Activated naive CD4-positive, alpha-beta T cell treated with anti-CD3 and anti-CD28 coated beads for 36 hours (primary cell): ENCODE measurements at regions of chrX and their contacts with region 1.

Region 1: DNA sequence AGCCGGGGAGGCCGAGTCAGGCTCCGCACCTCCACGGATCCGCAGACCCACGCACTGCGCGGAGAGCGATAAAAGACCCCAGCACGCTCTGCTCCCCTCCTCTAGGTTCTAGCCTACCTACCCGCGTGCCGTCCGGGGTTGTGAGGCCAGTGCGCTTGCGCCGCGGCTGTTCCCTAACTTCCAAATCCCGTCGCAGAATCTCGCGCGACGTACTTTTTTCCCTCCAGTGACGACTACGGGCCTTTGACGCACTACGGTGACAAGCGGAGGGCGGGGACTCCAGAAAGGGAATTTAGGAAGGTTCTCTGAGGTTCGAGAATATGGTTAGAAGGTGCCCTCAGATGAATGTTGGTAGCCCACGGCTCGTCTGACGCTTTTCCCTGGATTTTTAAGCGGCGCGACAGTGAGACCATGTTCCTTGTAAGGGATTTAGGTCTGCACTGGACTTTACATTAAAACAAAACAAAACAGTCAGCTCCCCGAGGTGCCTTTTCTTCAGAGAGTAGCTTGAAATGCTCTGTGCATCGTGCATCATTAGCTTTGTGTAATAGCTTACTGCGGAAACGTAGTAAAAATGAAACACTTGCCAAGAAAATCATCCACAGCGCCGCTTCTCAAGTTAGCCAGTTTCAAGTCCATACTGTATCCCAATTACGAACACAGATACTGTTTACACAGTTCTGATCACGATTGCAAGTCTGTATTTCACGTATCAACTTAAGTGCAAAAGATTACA is at the start of gene NKRF:
- DNase-seq: peak; percentile 94
- H3K4me3 Mint-ChIP-seq: peak within 1 kb of the TSS; percentile 96
- H3K27ac Mint-ChIP-seq: peak within 1 kb of the TSS; percentile 93
- H3K4me1 Mint-ChIP-seq: peaks cover 39% of the 10 kb centered on the region
- H3K27me3 Mint-ChIP-seq: no peaks in the 10 kb centered on the region
- total RNA-seq, gene NKRF: 15.8 to 17.0 TPM

Region 2: DNA sequence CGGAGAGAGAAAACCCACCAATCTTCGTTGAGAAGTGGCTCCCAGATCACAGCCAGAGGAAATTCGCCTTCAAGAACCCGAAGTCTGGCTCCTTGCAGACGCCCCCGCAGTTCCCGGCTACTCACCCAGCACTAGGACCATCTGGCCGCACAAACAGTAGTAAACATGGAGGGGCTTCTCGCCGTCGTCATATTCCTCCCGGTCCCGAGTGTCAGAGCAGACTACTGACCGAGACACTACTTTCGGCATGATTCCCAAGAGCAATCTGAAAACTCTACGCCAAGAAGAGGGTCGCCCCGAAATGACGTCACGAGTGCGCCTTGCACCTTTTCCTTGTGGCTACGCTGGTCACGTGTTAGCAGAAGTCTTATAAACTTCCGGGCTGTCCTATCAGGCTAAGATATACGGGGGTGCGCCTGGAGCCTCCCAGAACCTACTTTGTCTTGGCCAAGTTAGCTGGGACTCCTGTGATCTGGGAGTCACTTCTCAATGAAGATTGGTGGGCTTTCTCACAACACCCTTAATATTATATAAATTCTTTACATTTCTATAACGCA is 41.3 kb before region 1 on chrX and contains the start of gene STEEP1:
- CTCF ChIA-PET with region 1: no interaction called
- intact Hi-C with region 1: loop called (anchors 2 kb)
- DNase-seq: peak; percentile 95
- H3K4me3 Mint-ChIP-seq: peak within 1 kb of the TSS; percentile 95
- H3K27ac Mint-ChIP-seq: peak within 1 kb of the TSS; percentile 89
- H3K4me1 Mint-ChIP-seq: peaks cover 20% of the 10 kb centered on the region
- H3K27me3 Mint-ChIP-seq: no peaks in the 10 kb centered on the region
- total RNA-seq, gene STEEP1: 19.6 to 20.7 TPM

Region 3: DNA sequence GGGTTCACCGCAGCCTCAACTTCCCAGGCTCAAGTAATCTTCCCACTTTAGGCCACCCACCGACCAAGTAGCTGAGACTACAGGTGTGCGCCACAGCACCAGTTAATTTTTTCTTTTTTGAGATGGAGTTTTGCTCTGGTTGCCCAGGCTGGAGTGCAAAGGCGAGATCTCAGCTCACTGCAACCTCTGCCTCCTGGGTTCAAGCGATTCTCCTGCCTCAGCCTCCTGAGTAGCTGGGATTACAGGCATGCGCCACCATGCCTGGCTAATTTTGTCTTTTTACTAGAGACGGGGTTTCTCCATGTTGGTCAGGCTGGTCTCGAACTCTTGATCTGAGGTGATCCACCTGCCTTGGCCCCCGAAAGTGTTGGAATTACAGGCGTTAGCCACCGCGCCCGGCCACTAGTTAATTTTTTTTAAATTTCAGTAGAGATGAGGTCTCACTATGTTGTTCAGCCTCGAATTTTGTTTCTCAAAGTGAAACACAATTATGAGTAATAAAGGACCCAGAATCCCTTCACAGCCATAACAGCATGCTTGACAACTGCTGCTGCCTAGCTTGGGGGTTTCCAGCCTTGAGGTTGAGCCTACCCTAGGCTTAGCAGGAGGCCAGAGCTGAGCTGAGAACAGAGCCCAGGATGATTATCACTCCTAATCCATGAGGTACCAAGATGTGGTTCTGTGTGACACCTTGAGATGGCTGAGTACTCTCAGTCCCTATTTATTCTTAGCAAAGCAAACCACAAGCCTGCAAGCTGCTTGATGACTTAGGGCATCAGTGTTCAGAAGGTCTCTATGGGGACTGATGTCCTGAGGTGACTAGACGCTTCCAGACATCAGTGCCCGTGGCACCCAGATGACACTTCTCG is 41.3 kb after region 1 on chrX:
- CTCF ChIA-PET with region 1: interaction called, 7 read pairs
- intact Hi-C with region 1: loop called (anchors 1 kb)
- DNase-seq: peak; percentile 84
- H3K4me3 Mint-ChIP-seq: no peak overlapping the region
- H3K27ac Mint-ChIP-seq: peak overlapping the region; percentile 89
- H3K4me1 Mint-ChIP-seq: peaks cover 32% of the 10 kb centered on the region
- H3K27me3 Mint-ChIP-seq: no peaks in the 10 kb centered on the region

Region 4: DNA sequence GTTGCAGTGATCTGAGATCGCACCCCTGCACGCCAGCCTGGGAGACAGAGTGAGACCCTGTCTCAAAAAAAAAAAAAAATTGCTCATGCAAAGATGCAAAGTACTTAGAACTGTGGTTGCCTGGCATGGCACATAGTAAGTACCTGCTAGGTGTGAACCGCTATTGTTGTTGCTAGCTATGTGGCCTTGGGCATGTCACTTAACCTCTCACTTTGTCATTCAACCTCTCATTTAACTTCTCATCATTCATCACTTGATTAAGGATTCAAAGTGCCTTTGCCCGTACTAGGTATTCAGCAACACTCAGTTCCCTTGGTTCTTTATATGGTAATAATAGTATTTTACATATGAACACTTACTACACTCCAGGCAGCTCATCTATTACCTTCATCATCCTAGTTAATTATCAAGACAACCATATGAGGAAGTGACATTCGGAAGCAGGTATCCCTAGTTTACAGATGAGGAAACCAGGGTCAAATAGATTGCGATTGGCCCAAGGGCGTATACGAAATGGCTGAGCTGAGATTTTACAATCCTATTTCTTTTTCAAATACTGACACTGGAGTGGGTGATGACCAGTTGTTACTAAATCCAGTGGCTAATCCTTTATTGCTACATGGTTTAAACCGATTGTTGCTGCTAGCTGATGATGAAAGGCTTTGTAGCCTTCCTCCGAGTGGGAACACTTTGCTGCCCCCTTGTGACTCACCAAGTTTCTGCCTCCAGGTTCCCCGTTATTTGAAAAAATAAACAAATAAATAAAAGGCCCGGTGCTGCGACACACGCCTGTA is 123.2 kb after region 1 on chrX:
- CTCF ChIA-PET with region 1: interaction called, 10 read pairs
- intact Hi-C with region 1: loop called (anchors 1 kb)
- DNase-seq: peak; percentile 81
- H3K4me3 Mint-ChIP-seq: no peak overlapping the region
- H3K27ac Mint-ChIP-seq: no peak overlapping the region
- H3K4me1 Mint-ChIP-seq: peaks cover 6% of the 10 kb centered on the region
- H3K27me3 Mint-ChIP-seq: no peaks in the 10 kb centered on the region

Region 5: DNA sequence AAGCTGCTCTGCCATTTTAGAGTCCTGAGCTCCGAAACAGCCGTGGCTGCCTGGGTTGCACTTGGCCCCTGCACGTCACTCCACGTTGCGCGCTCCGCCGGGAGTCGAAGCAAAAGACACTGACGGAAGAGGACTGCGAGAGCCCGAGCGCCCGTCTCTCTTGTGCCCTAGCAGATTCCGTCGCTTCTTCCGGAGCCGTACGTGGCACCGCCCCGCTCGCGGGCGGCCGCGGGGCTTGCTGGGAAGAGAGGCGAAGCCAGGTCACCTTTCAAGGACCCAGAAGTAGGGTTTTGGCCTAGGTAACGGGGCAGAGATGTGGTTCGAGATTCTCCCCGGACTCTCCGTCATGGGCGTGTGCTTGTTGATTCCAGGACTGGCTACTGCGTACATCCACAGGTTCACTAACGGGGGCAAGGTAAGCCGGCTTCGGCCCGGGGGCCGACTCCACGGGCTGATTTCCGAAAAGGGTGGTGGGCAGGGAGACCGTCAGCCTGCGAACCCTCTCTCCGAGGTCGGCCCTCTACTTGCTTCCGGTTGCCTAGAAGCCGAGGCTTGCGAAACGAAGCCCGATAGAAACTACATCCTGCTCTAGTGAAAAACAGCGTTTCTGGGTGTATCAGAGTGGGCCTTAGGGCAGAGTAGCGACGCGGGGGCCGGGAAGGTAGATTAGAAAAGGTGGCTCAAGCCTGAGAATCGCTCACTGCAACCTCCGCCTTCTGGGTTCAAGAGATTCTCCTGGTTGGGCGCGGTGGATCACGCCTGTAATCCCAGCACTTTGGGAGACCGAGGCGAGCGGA is 265.3 kb after region 1 on chrX and contains the starts of genes NDUFA1 and RNF113A:
- CTCF ChIA-PET with region 1: no interaction called
- intact Hi-C with region 1: loop called (anchors 10 kb)
- DNase-seq: peak; percentile 86
- H3K4me3 Mint-ChIP-seq: peak within 1 kb of the TSS; percentile 97
- H3K27ac Mint-ChIP-seq: peak within 1 kb of the TSS; percentile 98
- H3K4me1 Mint-ChIP-seq: peaks cover 13% of the 10 kb centered on the region
- H3K27me3 Mint-ChIP-seq: no peaks in the 10 kb centered on the region
- total RNA-seq, gene NDUFA1: 105 to 107 TPM
- total RNA-seq, gene RNF113A: 20.8 to 22.0 TPM